Caco-2 (cell line): ENCODE measurements at regions of chr11 and their contacts with region 1.

Region 1: DNA sequence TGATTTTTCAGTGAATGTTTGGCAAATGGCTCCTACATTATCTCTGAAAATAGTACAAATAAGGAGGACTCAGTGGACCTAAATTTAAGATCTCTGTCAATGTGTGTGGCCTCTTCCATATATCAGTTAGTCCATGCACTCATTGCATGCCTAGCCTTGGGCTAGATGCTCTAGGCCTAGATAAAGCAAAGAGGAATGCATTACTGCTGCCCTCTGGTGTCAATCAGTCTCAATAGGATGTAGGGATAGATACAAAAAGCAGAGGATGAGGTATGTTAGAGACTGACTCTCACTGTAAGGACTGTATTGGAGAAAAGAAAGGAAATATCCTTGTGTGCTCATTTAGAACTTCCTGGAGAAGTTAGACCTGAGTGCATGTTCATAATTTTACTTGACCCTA is 42.0 kb downstream of the MS4A2 start:
- DNase-seq: peak; percentile 65 to 68
- H3K4me3 ChIP-seq: no peak overlapping the region
- H3K4me3 Mint-ChIP-seq: no peak overlapping the region
- H3K27ac Mint-ChIP-seq: no peak overlapping the region
- H3K4me1 ChIP-seq: peaks cover 6% of the 10 kb centered on the region; the same call in 1 of the 2 replicates
- H3K4me1 Mint-ChIP-seq: peaks cover 4% of the 10 kb centered on the region
- H3K27me3 ChIP-seq: no peaks in the 10 kb centered on the region
- H3K27me3 Mint-ChIP-seq: no peaks in the 10 kb centered on the region
- CTCF ChIP-seq: peak; percentile 47 to 77

Region 2: GRCh38 chr11:59891781-59892181 is 238.7 kb before region 1 on chr11:
- CTCF ChIA-PET with region 1: no interaction called
- POLR2A ChIA-PET with region 1: no interaction called
- intact Hi-C with region 1: no loop called
- DNase-seq: peak in 1 of 2 experiments; percentile 3
- H3K4me3 ChIP-seq: no peak overlapping the region
- H3K4me3 Mint-ChIP-seq: no peak overlapping the region
- H3K27ac Mint-ChIP-seq: no peak overlapping the region
- H3K4me1 ChIP-seq: no peaks in the 10 kb centered on the region
- H3K4me1 Mint-ChIP-seq: no peaks in the 10 kb centered on the region
- H3K27me3 ChIP-seq: no peaks in the 10 kb centered on the region
- H3K27me3 Mint-ChIP-seq: no peaks in the 10 kb centered on the region
- CTCF ChIP-seq: no peak

Region 3: GRCh38 chr11:59960502-59961381 is 169.8 kb before region 1 on chr11:
- CTCF ChIA-PET with region 1: no interaction called
- POLR2A ChIA-PET with region 1: no interaction called
- intact Hi-C with region 1: loop called (anchors 10 kb)
- DNase-seq: peak; percentile 22 to 57
- H3K4me3 ChIP-seq: no peak overlapping the region
- H3K4me3 Mint-ChIP-seq: no peak overlapping the region
- H3K27ac Mint-ChIP-seq: no peak overlapping the region
- H3K4me1 ChIP-seq: peaks cover 10% of the 10 kb centered on the region
- H3K4me1 Mint-ChIP-seq: no peaks in the 10 kb centered on the region
- H3K27me3 ChIP-seq: no peaks in the 10 kb centered on the region
- H3K27me3 Mint-ChIP-seq: no peaks in the 10 kb centered on the region
- CTCF ChIP-seq: no peak

Region 4: DNA sequence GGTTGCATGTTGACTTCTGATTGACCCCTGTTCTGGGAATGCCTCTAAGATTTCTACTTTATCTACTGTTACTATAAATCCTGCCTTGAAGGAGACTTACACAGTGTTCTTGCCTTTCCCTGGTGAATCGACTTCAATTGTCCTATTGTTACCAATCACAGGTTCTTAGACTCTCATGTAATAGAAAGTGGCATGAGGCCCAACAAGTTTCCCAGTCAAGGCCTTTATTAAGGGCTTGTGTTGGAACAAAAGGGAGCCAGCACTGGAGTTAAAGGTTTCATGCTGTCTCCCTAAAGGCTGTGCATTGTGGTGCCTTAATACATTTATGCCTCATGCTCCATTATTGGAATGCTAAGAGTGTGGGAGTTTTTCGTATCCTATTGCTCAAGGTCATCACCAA is 18.7 kb before region 1 on chr11:
- CTCF ChIA-PET with region 1: no interaction called
- POLR2A ChIA-PET with region 1: no interaction called
- intact Hi-C with region 1: no loop called
- DNase-seq: no peak
- H3K4me3 ChIP-seq: no peak overlapping the region
- H3K4me3 Mint-ChIP-seq: no peak overlapping the region
- H3K27ac Mint-ChIP-seq: no peak overlapping the region
- H3K4me1 ChIP-seq: no peaks in the 10 kb centered on the region
- H3K4me1 Mint-ChIP-seq: peaks cover 6% of the 10 kb centered on the region
- H3K27me3 ChIP-seq: no peaks in the 10 kb centered on the region
- H3K27me3 Mint-ChIP-seq: peaks cover 2% of the 10 kb centered on the region
- CTCF ChIP-seq: no peak

Region 5: GRCh38 chr11:60145677-60146076 is 15.2 kb after region 1 on chr11:
- CTCF ChIA-PET with region 1: no interaction called
- POLR2A ChIA-PET with region 1: no interaction called
- intact Hi-C with region 1: no loop called
- DNase-seq: no peak
- H3K4me3 ChIP-seq: no peak overlapping the region
- H3K4me3 Mint-ChIP-seq: no peak overlapping the region
- H3K27ac Mint-ChIP-seq: no peak overlapping the region
- H3K4me1 ChIP-seq: no peaks in the 10 kb centered on the region
- H3K4me1 Mint-ChIP-seq: no peaks in the 10 kb centered on the region
- H3K27me3 ChIP-seq: no peaks in the 10 kb centered on the region
- H3K27me3 Mint-ChIP-seq: peaks cover 5% of the 10 kb centered on the region
- CTCF ChIP-seq: no peak

Region 6: DNA sequence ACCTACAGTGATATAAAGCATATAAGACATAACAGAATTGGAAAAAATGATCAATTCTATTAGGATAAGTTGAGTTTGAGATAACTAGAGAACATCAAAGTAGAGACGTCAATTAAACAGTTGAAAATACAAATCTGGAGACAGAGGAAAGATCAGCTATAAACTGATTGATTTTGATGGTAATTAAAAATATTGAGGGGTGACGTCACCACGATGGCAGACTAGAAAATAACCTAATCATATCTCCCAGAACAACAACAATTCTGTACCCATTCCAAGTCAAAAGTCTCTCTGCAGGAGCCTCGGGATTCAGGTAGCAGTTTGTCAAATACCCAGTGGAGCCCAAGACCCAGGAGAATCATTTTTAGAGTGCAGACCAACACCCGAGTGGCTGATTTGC is 413.6 kb after region 1 on chr11:
- CTCF ChIA-PET with region 1: no interaction called
- POLR2A ChIA-PET with region 1: no interaction called
- intact Hi-C with region 1: no loop called
- DNase-seq: no peak
- H3K4me3 ChIP-seq: no peak overlapping the region
- H3K4me3 Mint-ChIP-seq: no peak overlapping the region
- H3K27ac Mint-ChIP-seq: no peak overlapping the region
- H3K4me1 ChIP-seq: no peaks in the 10 kb centered on the region
- H3K4me1 Mint-ChIP-seq: no peaks in the 10 kb centered on the region
- H3K27me3 ChIP-seq: 0 out of 2 replicates have a peak, but pooled peaks cover 1% of the 10 kb centered on the region
- H3K27me3 Mint-ChIP-seq: peaks cover 5% of the 10 kb centered on the region
- CTCF ChIP-seq: no peak